GM10248 (cell line): ENCODE measurements at regions of chr5 and their contacts with region 1.

Region 1: GRCh38 chr5:7886849-7887475 is 18.0 kb downstream of the MTRR start:
- DNase-seq: peak; percentile 35
- CTCF ChIP-seq: peak; percentile 43

Region 2: GRCh38 chr5:7650755-7651154 is 236.2 kb before region 1 on chr5:
- CTCF ChIA-PET with region 1: no interaction called
- POLR2A ChIA-PET with region 1: no interaction called
- DNase-seq: no peak
- CTCF ChIP-seq: no peak

Region 3: DNA sequence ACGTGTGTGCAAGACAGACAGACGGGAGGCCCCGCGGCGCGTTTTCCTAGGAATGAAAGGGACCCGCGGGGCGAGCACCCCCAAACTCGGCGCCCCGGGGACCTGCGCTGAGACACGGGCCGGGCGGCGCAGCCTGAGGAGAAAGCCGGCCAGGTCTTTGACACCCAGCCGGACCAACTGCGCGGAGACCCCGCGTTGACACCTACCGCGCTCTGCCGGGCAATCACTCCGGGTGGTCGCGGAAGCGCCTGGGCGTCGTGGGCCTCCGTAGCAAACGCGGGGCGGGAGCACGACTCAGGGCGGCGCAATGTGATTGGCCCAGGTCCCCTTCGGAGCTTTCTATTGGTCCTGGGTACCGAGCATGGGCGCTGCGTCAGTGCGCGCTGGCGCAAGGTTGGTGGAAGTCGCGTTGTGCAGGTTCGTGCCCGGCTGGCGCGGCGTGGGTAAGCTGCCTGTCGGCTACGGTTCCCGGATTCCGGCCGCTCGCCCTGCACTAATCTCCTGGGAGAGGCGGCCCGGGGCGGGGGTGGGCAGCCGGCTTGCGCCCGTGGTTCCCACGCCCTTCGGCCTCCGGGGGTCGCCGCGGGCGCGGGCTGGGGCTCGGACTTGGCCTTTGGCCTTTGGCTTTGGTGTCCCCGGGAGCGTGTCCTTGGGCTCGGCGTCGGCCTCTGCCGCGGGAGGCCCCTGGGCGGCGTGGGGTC is 18.0 kb before region 1 on chr5 and contains the starts of genes FASTKD3 and MTRR:
- CTCF ChIA-PET with region 1: interaction called, 75 read pairs
- POLR2A ChIA-PET with region 1: no interaction called
- DNase-seq: peak; percentile 94
- CTCF ChIP-seq: no peak

Region 4: GRCh38 chr5:7897014-7897632 is 10.2 kb after region 1 on chr5:
- CTCF ChIA-PET with region 1: interaction called, 10 read pairs
- POLR2A ChIA-PET with region 1: no interaction called
- DNase-seq: no peak
- CTCF ChIP-seq: no peak

Region 5: DNA sequence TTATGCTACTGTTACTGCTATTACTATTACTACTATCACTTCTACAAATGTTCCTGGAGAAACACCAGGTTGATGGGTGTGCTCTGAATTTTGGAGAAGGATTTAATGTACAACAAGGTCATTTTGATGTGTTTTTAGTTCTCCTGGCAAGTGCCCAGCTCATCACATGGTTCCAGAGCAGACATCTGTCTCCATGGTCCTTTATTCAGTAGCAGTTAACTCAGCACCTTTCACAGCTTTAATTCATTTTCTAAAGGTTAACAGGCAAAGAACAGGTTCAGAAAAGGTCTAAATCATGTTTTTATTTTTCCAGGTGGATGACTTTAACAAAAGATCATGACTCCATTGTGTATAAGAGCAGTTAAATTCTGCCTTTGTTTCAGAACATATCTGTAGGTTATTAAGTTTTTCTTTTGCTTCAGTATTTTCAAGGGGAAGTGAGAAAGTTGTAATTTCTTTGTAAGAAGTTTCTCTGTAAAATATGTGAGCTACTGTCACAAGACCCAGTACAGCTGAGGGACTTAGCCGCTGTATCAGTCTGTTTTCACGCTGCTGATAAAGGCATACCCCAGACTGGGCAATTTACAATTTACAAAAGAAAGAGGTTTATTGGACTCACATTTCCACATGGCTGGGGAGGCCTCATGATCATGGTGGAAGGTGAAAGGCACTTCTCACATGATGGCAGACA is 23.9 kb after region 1 on chr5:
- CTCF ChIA-PET with region 1: interaction called, 11 read pairs
- POLR2A ChIA-PET with region 1: no interaction called
- DNase-seq: no peak
- CTCF ChIP-seq: no peak

Region 6: GRCh38 chr5:7916171-7916804 is 29.3 kb after region 1 on chr5:
- CTCF ChIA-PET with region 1: interaction called, 11 read pairs
- POLR2A ChIA-PET with region 1: no interaction called
- DNase-seq: no peak
- CTCF ChIP-seq: no peak

Region 7: DNA sequence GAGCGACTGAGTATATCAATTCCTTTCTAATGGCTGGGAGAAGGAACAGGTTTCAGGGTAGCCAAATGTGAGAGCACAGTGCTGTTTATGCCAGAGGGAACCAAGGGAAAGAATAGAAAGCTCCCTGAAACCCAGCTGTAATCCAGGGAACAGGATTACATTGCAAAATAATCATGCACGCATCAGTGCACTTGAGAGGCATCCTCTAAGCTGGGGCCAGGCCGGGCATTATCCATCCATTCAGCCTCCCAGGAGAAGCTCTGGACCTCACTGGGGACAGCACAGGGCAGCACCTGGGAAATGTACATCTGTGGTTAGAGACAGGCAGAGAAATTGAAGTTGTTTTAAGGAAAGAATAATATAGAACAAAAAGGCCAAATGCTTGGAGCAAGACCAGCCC is 54.7 kb after region 1 on chr5:
- CTCF ChIA-PET with region 1: no interaction called
- POLR2A ChIA-PET with region 1: no interaction called
- DNase-seq: no peak
- CTCF ChIP-seq: no peak